H1 (cell line): ENCODE measurements at regions of chr4 and their contacts with region 1.

Region 1: GRCh38 chr4:84167564-84167963 is 331.5 kb downstream of the NKX6-1 start:
- DNase-seq: peak in 1 of 2 experiments; percentile 17
- H3K4me3 ChIP-seq: no peak overlapping the region
- H3K27ac ChIP-seq: no peak overlapping the region
- H3K4me1 ChIP-seq: no peaks in the 10 kb centered on the region
- H3K27me3 ChIP-seq: no peaks in the 10 kb centered on the region
- CTCF ChIP-seq: peak; percentile 21 to 88 (median 75)
- EP300 ChIP-seq: no peak
- POLR2A ChIP-seq: no peak
- RAD21 ChIP-seq: peak; percentile 62 to 72

Region 2: GRCh38 chr4:84177831-84178542 is 10.4 kb after region 1 on chr4:
- CTCF ChIA-PET with region 1: interaction called, 10 read pairs
- POLR2A ChIA-PET with region 1: no interaction called
- DNase-seq: no peak
- H3K4me3 ChIP-seq: no peak overlapping the region
- H3K27ac ChIP-seq: no peak overlapping the region
- H3K4me1 ChIP-seq: no peaks in the 10 kb centered on the region
- H3K27me3 ChIP-seq: no peaks in the 10 kb centered on the region; a peak in 1 of 7 replicates
- CTCF ChIP-seq: no peak
- EP300 ChIP-seq: no peak
- POLR2A ChIP-seq: no peak
- RAD21 ChIP-seq: no peak

Region 3: GRCh38 chr4:84258905-84259830 is 91.6 kb after region 1 on chr4:
- CTCF ChIA-PET with region 1: interaction called, 11 read pairs
- POLR2A ChIA-PET with region 1: no interaction called
- DNase-seq: peak in 1 of 2 experiments; percentile 50
- H3K4me3 ChIP-seq: no peak overlapping the region
- H3K27ac ChIP-seq: no peak overlapping the region
- H3K4me1 ChIP-seq: no peaks in the 10 kb centered on the region; a peak in 1 of 7 replicates
- H3K27me3 ChIP-seq: no peaks in the 10 kb centered on the region
- CTCF ChIP-seq: peak in 2 of 3 experiments; percentile 79 to 83; a peak in 3 of 4 replicates
- EP300 ChIP-seq: no peak
- POLR2A ChIP-seq: no peak
- RAD21 ChIP-seq: peak; percentile 84 to 90